Esophagus squamous epithelium (tissue), 5 donors: ENCODE measurements at regions of chr15 and their contacts with region 1.

Region 1: GRCh38 chr15:99282121-99282520 is 30.8 kb downstream of the LRRC28 start:
- DNase-seq: no peak
- H3K4me3 ChIP-seq: no peak overlapping the region
- H3K27ac ChIP-seq: no peak overlapping the region
- H3K4me1 ChIP-seq: peaks cover 0 to 16% (median 7%) of the 10 kb centered on the region in 3 donors
- H3K27me3 ChIP-seq: no peaks in the 10 kb centered on the region
- CTCF ChIP-seq: no peak
- POLR2A ChIP-seq: no peak

Region 2: GRCh38 chr15:99704444-99704838 is 422.3 kb after region 1 on chr15:
- intact Hi-C with region 1: loop called (anchors 10 kb)
- DNase-seq: no peak
- H3K4me3 ChIP-seq: no peak overlapping the region
- H3K27ac ChIP-seq: peak overlapping the region; percentile 18 to 85 (median 80)
- H3K4me1 ChIP-seq: peaks cover 0 to 49% (median 34%) of the 10 kb centered on the region in 3 donors
- H3K27me3 ChIP-seq: no peaks in the 10 kb centered on the region
- CTCF ChIP-seq: peak; percentile 63 to 86 (median 77)
- POLR2A ChIP-seq: no peak